ENCODE measurements at regions of chr3 and their contacts with region 1.

Region 1: GRCh38 chr3:139561959-139562676 is 22.6 kb upstream of the RBP1 start:
- DNase-seq: peak; percentile 25 to 29
- ATAC-seq: peak; percentile 80 to 89; a peak in 5 of 6 replicates
- H3K4me3 ChIP-seq: no peak overlapping the region
- H3K27ac ChIP-seq: no peak overlapping the region
- H3K4me1 ChIP-seq: no peaks in the 10 kb centered on the region
- CTCF ChIP-seq: peak; percentile 44
- EP300 ChIP-seq: no peak
- POLR2A ChIP-seq: no peak
- RAD21 ChIP-seq: peak; percentile 65 to 79

Region 2: GRCh38 chr3:139267300-139268246 is 294.5 kb before region 1 on chr3:
- CTCF ChIA-PET with region 1: no interaction called
- POLR2A ChIA-PET with region 1: no interaction called
- DNase-seq: no peak
- ATAC-seq: no peak
- H3K4me3 ChIP-seq: no peak overlapping the region
- H3K27ac ChIP-seq: no peak overlapping the region
- H3K4me1 ChIP-seq: no peaks in the 10 kb centered on the region
- CTCF ChIP-seq: no peak
- EP300 ChIP-seq: no peak
- POLR2A ChIP-seq: no peak
- RAD21 ChIP-seq: no peak

Region 3: GRCh38 chr3:139427283-139427993 is 134.7 kb before region 1 on chr3:
- CTCF ChIA-PET with region 1: interaction called, 37 read pairs
- POLR2A ChIA-PET with region 1: no interaction called
- DNase-seq: peak; percentile 49 to 60
- ATAC-seq: peak; percentile 84 to 88
- H3K4me3 ChIP-seq: no peak overlapping the region
- H3K27ac ChIP-seq: no peak overlapping the region
- H3K4me1 ChIP-seq: no peaks in the 10 kb centered on the region
- CTCF ChIP-seq: peak; percentile 71
- EP300 ChIP-seq: no peak
- POLR2A ChIP-seq: no peak
- RAD21 ChIP-seq: peak; percentile 70 to 76

Region 4: DNA sequence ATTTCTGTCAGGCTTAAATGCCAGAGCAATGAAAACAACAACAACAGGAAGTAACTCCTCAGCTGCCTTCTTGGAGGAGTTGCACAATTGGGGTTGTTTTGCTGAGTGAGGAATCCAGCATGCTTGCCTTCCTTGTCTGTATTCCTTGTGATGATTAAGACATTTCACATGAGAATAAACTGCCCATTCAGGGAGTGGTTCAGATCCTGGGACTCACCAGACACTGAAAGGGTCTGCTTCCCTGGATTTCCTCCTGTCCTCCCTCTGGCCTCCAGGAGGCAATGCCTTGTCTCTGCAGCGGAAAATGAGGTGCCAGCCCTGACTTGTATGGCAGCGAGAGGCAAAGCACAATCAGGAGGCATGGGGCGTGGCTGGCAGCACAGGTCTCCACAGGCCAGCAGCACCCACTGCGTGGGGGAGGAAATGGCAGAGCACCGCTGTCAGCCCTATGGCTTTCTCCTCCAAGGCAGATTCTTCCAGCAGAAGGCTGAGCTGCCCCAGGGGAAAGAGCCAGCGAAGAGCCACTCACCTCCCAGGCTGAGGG is 127.3 kb before region 1 on chr3:
- CTCF ChIA-PET with region 1: interaction called, 11 read pairs
- POLR2A ChIA-PET with region 1: no interaction called
- DNase-seq: peak in 1 of 2 experiments; percentile 23
- ATAC-seq: peak in 1 of 2 experiments; percentile 19; a peak in 1 of 6 replicates
- H3K4me3 ChIP-seq: no peak overlapping the region
- H3K27ac ChIP-seq: no peak overlapping the region
- H3K4me1 ChIP-seq: no peaks in the 10 kb centered on the region
- CTCF ChIP-seq: no peak
- EP300 ChIP-seq: no peak
- POLR2A ChIP-seq: no peak
- RAD21 ChIP-seq: no peak

Measured in A549 (cell line).